Activated CD4-positive, alpha-beta T cell treated with anti-CD3 and anti-CD28 coated beads for 36 hours (primary cell): ENCODE measurements at regions of chr4 and their contacts with region 1.

Region 1: DNA sequence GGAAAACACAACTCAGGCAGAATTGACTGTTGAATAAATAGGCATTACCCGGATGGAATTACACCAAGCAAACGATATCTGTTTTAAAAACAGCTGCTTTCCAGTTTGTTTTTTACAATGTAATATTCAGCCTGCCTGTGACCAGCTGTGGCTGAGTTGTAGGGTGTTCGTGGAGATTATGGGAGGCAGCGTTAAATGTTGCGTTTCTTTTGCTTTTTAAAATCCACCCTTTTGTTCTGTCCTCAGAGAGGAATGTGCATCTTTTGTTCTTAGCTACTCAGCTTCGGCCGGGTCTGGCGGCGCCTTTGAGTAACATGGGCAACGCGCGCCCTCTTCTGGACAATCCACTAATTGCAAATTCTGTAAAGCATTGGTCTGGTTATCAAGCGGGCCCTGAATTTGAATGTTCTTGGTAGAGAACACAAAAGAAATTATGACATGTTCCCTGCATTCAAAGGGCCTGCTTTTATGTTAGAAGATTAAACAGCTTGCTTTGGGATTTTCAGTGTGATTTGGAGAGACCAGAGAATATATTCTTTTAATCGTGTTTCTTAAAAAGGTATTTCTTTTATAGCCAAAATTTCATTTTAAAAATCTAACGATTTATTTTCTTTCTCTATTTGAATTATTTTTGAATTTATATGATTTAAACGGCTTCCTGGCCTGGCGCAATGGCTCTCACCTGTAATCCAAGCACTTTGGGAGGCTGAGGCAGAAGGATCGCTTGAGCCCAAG is 76.3 kb upstream of the TRIM2 start:
- DNase-seq: peak; percentile 91
- ATAC-seq: peak; percentile 86
- H3K4me3 Mint-ChIP-seq: no peak overlapping the region
- H3K27ac Mint-ChIP-seq: no peak overlapping the region
- H3K4me1 Mint-ChIP-seq: peaks cover 7% of the 10 kb centered on the region
- H3K27me3 Mint-ChIP-seq: no peaks in the 10 kb centered on the region

Region 2: DNA sequence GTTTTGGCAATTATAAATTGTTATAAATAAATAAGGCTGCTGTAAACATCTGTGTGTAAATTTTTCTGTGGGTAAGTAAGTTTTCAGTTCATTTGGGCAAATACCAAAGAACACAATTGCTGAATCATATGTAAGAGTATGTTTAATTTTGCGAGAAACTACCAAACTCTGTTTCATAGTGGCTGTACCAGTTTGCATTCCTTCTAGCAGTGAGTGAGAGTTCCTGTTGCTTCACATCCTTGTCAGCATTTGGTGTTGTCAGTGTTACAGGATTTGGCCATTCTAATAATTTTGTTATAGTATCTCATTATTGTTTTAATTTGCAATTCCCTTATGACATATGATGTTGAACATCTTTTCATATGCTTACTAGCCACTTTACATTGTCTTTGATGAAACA is 299.8 kb before region 1 on chr4:
- CTCF ChIA-PET with region 1: no interaction called
- POLR2A ChIA-PET with region 1: no interaction called
- intact Hi-C with region 1: no loop called
- DNase-seq: no peak
- ATAC-seq: no peak
- H3K4me3 Mint-ChIP-seq: no peak overlapping the region
- H3K27ac Mint-ChIP-seq: no peak overlapping the region
- H3K4me1 Mint-ChIP-seq: no peaks in the 10 kb centered on the region
- H3K27me3 Mint-ChIP-seq: no peaks in the 10 kb centered on the region

Region 3: GRCh38 chr4:152850377-152850776 is 277.6 kb before region 1 on chr4:
- CTCF ChIA-PET with region 1: interaction called, 50 read pairs
- POLR2A ChIA-PET with region 1: no interaction called
- intact Hi-C with region 1: loop called (anchors 1 kb)
- DNase-seq: peak; percentile 64
- ATAC-seq: peak; percentile 69
- H3K4me3 Mint-ChIP-seq: no peak overlapping the region
- H3K27ac Mint-ChIP-seq: peak overlapping the region; percentile 40
- H3K4me1 Mint-ChIP-seq: peaks cover 22% of the 10 kb centered on the region
- H3K27me3 Mint-ChIP-seq: no peaks in the 10 kb centered on the region

Region 4: GRCh38 chr4:153074936-153075630 is 52.8 kb before region 1 on chr4:
- CTCF ChIA-PET with region 1: interaction called, 345 read pairs
- POLR2A ChIA-PET with region 1: no interaction called
- intact Hi-C with region 1: no loop called
- DNase-seq: no peak
- ATAC-seq: no peak
- H3K4me3 Mint-ChIP-seq: no peak overlapping the region
- H3K27ac Mint-ChIP-seq: no peak overlapping the region
- H3K4me1 Mint-ChIP-seq: peaks cover 7% of the 10 kb centered on the region
- H3K27me3 Mint-ChIP-seq: no peaks in the 10 kb centered on the region

Region 5: GRCh38 chr4:153089742-153090141 is 38.2 kb before region 1 on chr4:
- CTCF ChIA-PET with region 1: interaction called, 345 read pairs
- POLR2A ChIA-PET with region 1: interaction called, 5 read pairs
- intact Hi-C with region 1: no loop called
- DNase-seq: no peak
- ATAC-seq: no peak
- H3K4me3 Mint-ChIP-seq: no peak overlapping the region
- H3K27ac Mint-ChIP-seq: no peak overlapping the region
- H3K4me1 Mint-ChIP-seq: peaks cover 18% of the 10 kb centered on the region
- H3K27me3 Mint-ChIP-seq: no peaks in the 10 kb centered on the region

Region 6: DNA sequence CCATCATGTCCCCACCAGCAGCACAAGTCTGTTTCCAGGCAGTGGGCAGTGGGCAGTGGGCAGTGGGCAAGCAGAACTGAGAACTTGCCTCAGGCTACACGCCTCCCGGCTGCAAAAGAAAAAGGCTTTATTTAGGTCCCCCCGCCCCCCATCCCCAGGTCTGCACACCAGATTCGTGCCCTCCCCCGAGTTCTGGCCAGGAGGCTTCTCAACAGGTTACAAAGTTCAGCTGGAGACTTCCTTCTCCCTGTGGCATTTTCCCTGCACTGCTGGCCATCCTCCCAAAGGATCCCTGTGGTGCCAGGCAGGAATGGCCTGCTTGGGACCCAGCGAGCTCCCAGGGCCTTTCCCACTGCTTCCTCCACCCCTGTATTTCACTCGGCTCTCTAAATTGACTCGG is 20.7 kb before region 1 on chr4:
- CTCF ChIA-PET with region 1: interaction called, 53 read pairs
- POLR2A ChIA-PET with region 1: no interaction called
- intact Hi-C with region 1: no loop called
- DNase-seq: no peak
- ATAC-seq: no peak
- H3K4me3 Mint-ChIP-seq: no peak overlapping the region
- H3K27ac Mint-ChIP-seq: no peak overlapping the region
- H3K4me1 Mint-ChIP-seq: peaks cover 3% of the 10 kb centered on the region
- H3K27me3 Mint-ChIP-seq: no peaks in the 10 kb centered on the region

Region 7: GRCh38 chr4:153781717-153782416 is 653.9 kb after region 1 on chr4:
- CTCF ChIA-PET with region 1: no interaction called
- POLR2A ChIA-PET with region 1: no interaction called
- intact Hi-C with region 1: no loop called
- DNase-seq: no peak
- ATAC-seq: no peak
- H3K4me3 Mint-ChIP-seq: no peak overlapping the region
- H3K27ac Mint-ChIP-seq: no peak overlapping the region
- H3K4me1 Mint-ChIP-seq: no peaks in the 10 kb centered on the region
- H3K27me3 Mint-ChIP-seq: peaks cover 44% of the 10 kb centered on the region